Sciatic nerve (tissue), 2 donors: ENCODE measurements at regions of chr20 and their contacts with region 1.

Region 1: GRCh38 chr20:56468316-56469082 is at the start of gene RTF2:
- DNase-seq: peak; percentile 96
- ATAC-seq: peak; percentile 100
- total RNA-seq, gene RTF2: 88.7 TPM

Region 2: GRCh38 chr20:56359212-56360132 is 109.0 kb before region 1 on chr20:
- intact Hi-C with region 1: loop called (anchors 5 kb)
- DNase-seq: peak; percentile 76
- ATAC-seq: peak; percentile 71

Region 3: GRCh38 chr20:56429502-56429901 is 39.0 kb before region 1 on chr20:
- intact Hi-C with region 1: no loop called
- DNase-seq: peak; percentile 40
- ATAC-seq: no peak